Sciatic nerve (tissue), 2 donors: ENCODE measurements at regions of chr10 and their contacts with region 1.

Region 1: GRCh38 chr10:86899670-86900276 is 57.6 kb downstream of the MMRN2 start:
- DNase-seq: peak; percentile 76
- ATAC-seq: peak; percentile 90

Region 2: DNA sequence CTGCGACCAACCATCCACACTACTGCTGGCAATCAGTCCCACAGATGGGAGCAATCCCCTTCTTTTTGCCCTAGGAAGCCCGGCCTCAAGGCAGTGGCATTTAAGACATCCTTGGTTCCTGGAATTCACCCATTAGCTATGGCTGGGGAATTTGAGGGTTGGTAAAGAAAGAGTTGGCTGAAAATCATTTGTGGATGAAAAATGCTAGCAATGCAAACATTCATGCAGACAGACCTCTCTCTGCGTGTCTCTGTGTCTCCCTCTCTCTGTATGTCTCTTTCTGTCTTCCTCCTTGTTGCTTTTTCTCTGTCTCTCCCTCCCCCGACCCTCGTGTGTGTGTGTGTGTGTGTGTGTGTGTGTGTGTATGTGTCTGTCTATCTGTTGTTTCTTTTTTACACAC is 212.1 kb before region 1 on chr10:
- intact Hi-C with region 1: loop called (anchors 2 kb)
- DNase-seq: no peak
- ATAC-seq: no peak

Region 3: GRCh38 chr10:86971232-86971991 is 71.6 kb after region 1 on chr10:
- intact Hi-C with region 1: no loop called
- DNase-seq: peak; percentile 96
- ATAC-seq: peak; percentile 85

Region 4: DNA sequence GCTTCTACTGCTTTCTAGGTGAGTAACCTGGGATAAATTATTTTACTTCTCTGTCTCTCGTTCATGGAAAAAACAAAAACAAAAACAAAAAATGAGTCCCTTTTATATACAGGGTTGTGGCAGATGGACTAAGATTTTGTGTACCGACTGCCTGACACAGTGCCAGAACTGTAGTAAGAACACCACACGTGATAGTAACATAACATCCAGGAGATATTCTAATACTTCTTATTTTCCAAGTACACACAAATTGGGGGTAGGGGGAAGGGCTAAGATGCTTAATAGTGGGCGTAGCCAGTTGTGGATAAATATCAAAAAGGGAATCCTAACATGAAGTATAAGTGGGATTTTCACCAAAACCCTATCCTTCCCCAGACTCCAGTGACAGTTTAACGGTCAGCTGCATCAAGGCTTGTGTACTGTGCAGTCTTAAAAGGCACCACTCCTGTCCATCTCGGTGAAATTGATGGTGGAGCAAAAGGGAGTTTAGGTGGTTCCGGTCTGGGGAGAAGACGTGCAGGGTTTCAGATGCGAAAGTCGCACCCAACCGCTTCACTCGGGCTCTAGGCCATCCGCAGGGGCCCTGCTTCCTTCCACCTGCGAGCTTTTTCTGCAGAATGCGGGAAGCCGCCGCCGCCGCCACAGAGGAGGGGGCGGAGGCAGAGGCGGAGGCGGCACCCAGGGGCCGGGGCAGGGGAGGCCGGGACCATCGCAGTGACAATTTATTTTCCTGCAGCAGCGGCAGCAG is 1979.9 kb after region 1 on chr10 and contains the start of gene STAMBPL1:
- intact Hi-C with region 1: no loop called
- DNase-seq: peak; percentile 76
- ATAC-seq: peak; percentile 79
- total RNA-seq, gene STAMBPL1: 13.6 TPM